GM23248 (cell line): ENCODE measurements at regions of chr9 and their contacts with region 1.

Region 1: GRCh38 chr9:88991066-88992034 is at the start of gene S1PR3:
- DNase-seq: peak; percentile 71
- H3K4me3 ChIP-seq: peak within 1 kb of the TSS; percentile 84
- H3K27ac ChIP-seq: no peak within 1 kb of the TSS
- H3K4me1 ChIP-seq: peaks cover 33% of the 10 kb centered on the region
- H3K27me3 ChIP-seq: no peaks in the 10 kb centered on the region
- total RNA-seq, gene S1PR3: 15.8 and 16.9 TPM in 2 replicates

Region 2: DNA sequence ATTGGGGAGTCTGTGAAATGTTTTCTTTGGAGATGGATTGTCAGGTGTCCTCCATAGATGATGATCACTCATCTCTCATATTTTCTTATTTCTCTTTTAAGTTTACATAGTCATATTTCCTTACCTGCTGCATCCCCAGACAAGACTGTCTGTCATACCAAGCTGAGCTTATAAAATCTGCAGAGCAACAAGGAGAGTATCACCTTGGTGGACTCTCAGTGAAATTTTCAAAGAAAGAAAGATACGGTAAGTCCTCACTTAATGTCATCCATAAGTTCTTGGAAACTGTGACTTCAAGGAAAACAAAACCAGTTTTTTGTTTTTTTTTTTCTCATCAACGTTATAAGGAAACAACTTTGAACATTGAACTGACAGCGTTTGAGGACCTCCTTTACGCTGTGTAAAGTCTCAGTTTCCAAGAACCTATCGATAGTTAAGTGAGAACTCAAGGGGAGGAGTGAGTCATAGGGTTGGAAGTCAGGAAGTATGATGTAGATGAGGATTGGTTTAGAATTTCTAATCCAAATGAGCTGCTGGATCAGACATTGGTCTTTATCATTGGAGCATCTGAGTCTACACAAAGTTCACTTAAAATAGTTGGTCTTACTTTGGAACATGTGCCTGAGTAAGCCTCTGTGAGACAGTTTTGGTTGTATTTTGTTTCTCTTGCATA is 557.6 kb before region 1 on chr9:
- in situ Hi-C with region 1: no loop called
- DNase-seq: peak; percentile 17
- H3K4me3 ChIP-seq: no peak overlapping the region
- H3K27ac ChIP-seq: no peak overlapping the region
- H3K4me1 ChIP-seq: 0 out of 2 replicates have a peak, but pooled peaks cover 3% of the 10 kb centered on the region
- H3K27me3 ChIP-seq: no peaks in the 10 kb centered on the region

Region 3: GRCh38 chr9:88660611-88661010 is 330.7 kb before region 1 on chr9:
- in situ Hi-C with region 1: loop called (anchors 10 kb)
- DNase-seq: peak; percentile 59
- H3K4me3 ChIP-seq: no peak overlapping the region
- H3K27ac ChIP-seq: no peak overlapping the region
- H3K4me1 ChIP-seq: peaks cover 12% of the 10 kb centered on the region
- H3K27me3 ChIP-seq: no peaks in the 10 kb centered on the region

Region 4: DNA sequence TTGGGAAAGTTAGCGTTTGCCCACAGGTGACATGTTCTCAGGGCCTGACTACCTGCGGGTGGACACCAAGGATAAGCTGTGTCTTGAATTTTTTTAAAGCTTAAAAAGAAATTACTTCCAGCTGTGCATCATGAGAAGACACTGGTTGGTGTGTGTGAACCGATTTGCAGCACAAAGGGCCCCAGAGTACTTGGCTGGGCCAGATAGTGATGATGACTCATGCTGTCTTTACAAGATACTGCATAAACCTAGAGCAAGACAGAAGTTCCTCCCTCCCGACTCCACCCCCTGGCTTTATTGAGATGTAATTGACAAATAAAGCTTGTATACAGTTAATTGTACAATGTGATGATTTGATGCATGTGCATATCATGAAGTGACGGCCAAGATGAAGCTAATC is 243.6 kb before region 1 on chr9:
- in situ Hi-C with region 1: loop called (anchors 10 kb)
- DNase-seq: peak; percentile 96
- H3K4me3 ChIP-seq: no peak overlapping the region
- H3K27ac ChIP-seq: peak overlapping the region; percentile 66
- H3K4me1 ChIP-seq: peaks cover 55% of the 10 kb centered on the region
- H3K27me3 ChIP-seq: no peaks in the 10 kb centered on the region